Mammary epithelial cell (primary cell): ENCODE measurements at regions of chr15 and their contacts with region 1.

Region 1: GRCh38 chr15:41207687-41208448 is 22.7 kb downstream of the EXD1 start:
- DNase-seq: peak; percentile 90
- H3K4me3 ChIP-seq: peak overlapping the region in 2 of 3 experiments; percentile 24 to 32
- H3K27ac ChIP-seq: peak overlapping the region; percentile 90
- H3K4me1 ChIP-seq: peaks cover 16% of the 10 kb centered on the region
- H3K27me3 ChIP-seq: no peaks in the 10 kb centered on the region
- CTCF ChIP-seq: no peak

Region 2: GRCh38 chr15:41258706-41259471 is 51.0 kb after region 1 on chr15:
- CTCF ChIA-PET with region 1: no interaction called
- dilution Hi-C with region 1: no loop called
- in situ Hi-C with region 1: no loop called
- intact Hi-C with region 1: no loop called
- DNase-seq: peak; percentile 39
- H3K4me3 ChIP-seq: no peak overlapping the region
- H3K27ac ChIP-seq: no peak overlapping the region
- H3K4me1 ChIP-seq: peaks cover 13% of the 10 kb centered on the region
- H3K27me3 ChIP-seq: no peaks in the 10 kb centered on the region
- CTCF ChIP-seq: no peak

Region 3: DNA sequence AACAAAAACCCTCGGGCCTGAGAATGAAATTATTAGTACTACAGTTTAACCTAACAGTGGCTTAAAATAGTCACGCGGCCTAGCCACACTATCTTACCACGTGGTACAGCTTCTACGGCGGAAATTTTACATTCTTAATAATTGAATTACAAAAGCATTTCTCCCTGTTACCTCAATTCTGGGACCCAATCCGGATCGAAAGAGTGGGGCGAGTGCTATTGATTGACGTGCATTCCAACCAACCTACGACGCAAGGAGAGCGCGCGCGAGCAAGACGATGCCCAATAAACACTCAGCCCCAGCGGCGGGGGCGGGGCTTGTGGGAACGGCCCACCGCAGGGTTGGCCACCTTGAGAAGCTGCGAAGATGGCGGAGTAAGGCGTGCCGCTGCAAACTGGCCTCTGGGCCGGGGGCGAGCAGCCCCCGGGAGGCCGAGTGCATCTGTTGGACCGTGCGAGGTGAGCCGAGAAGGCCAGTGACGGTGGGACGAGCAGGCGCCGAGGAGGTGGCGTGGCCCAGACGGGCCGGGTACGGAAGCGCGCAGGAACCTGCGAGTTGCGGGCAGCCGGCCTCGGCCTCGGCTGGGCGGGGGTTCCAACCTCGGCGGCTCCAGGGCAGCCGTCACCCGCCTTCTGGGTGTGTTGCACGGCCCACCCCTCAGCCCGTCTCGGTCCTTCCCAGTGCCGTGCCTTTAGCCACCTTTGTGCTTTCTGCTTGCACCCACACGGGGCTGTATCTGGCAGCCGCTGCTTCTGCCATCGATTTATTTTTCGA is 76.0 kb after region 1 on chr15:
- CTCF ChIA-PET with region 1: no interaction called
- dilution Hi-C with region 1: no loop called
- in situ Hi-C with region 1: no loop called
- intact Hi-C with region 1: loop called (anchors 5 kb)
- DNase-seq: peak; percentile 98
- H3K4me3 ChIP-seq: peak overlapping the region; percentile 71 to 98 (median 92)
- H3K27ac ChIP-seq: peak overlapping the region; percentile 77
- H3K4me1 ChIP-seq: peaks cover 11% of the 10 kb centered on the region
- H3K27me3 ChIP-seq: no peaks in the 10 kb centered on the region
- CTCF ChIP-seq: no peak